Panc1 (cell line): ENCODE measurements at regions of chr7 and their contacts with region 1.

Region 1: DNA sequence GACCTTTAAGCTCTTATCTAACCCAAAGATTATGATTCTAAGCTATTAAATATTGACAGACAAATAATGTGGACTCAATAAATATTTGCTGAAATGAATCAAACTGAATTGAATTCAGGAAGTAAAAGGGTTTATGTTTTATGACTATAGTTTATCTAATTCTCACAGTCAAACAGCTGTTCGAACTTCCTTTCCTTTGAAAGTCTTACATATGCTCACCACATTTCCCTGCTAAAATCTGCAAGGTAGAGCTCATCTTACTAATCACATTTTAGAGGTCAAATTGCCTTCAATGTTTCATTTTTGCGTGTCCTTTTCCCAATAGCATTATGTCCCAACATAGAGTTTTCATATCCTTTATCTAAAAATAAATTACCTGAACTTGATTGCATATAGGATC is 154.9 kb upstream of the PPP1R3A start:
- DNase-seq: no peak
- ATAC-seq: no peak
- H3K4me3 ChIP-seq: no peak overlapping the region
- H3K27ac ChIP-seq: no peak overlapping the region
- H3K4me1 ChIP-seq: no peaks in the 10 kb centered on the region
- H3K27me3 ChIP-seq: peaks cover 3% of the 10 kb centered on the region; the same call in 1 of the 2 replicates
- CTCF ChIP-seq: no peak

Region 2: DNA sequence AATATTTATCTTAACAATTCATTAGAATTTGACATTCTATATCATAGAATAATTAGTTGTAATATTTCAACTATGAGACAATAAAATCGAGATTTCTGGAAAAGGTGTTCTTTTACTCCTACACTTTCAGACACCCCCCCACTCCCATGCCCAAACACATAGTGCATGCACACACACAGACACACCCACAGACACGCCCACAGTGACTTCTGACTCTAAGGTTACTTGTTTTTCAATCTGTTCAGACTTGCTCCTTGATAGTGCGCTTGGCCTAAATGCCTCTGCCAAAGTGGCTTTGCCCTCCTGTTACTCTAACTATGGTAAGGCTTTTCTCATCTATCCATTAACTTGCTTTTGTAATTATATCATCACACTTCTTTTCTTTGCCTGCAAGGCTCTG is 10.9 kb before region 1 on chr7:
- CTCF ChIA-PET with region 1: no interaction called
- POLR2A ChIA-PET with region 1: no interaction called
- in situ Hi-C with region 1: no loop called
- intact Hi-C with region 1: loop called (anchors 1 kb)
- DNase-seq: no peak
- ATAC-seq: no peak
- H3K4me3 ChIP-seq: no peak overlapping the region
- H3K27ac ChIP-seq: no peak overlapping the region
- H3K4me1 ChIP-seq: no peaks in the 10 kb centered on the region
- H3K27me3 ChIP-seq: no peaks in the 10 kb centered on the region
- CTCF ChIP-seq: no peak

Region 3: DNA sequence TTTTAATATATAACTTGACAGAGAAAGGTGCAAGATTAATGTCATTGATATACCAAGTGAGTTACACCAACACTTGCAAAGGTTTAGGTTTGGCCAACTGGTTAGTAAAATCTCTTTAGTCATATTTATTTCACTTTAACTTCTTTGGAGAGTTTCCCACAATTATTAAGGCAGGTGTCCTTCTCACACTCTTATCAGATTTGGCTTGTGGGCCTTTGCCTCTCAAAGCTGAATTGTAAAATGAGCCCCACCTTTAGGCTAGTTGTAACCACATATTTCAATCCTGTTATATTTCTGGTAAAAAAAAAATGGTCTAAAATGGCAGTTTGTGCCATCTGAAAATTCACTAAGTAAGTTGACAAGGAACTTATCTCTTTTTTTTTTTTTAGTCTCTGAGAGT is 314.3 kb after region 1 on chr7:
- CTCF ChIA-PET with region 1: no interaction called
- POLR2A ChIA-PET with region 1: no interaction called
- in situ Hi-C with region 1: no loop called
- intact Hi-C with region 1: no loop called
- DNase-seq: no peak
- ATAC-seq: no peak
- H3K4me3 ChIP-seq: no peak overlapping the region
- H3K27ac ChIP-seq: no peak overlapping the region
- H3K4me1 ChIP-seq: no peaks in the 10 kb centered on the region
- H3K27me3 ChIP-seq: no peaks in the 10 kb centered on the region
- CTCF ChIP-seq: no peak